ENCODE measurements at regions of chr4 and their contacts with region 1.

Region 1: DNA sequence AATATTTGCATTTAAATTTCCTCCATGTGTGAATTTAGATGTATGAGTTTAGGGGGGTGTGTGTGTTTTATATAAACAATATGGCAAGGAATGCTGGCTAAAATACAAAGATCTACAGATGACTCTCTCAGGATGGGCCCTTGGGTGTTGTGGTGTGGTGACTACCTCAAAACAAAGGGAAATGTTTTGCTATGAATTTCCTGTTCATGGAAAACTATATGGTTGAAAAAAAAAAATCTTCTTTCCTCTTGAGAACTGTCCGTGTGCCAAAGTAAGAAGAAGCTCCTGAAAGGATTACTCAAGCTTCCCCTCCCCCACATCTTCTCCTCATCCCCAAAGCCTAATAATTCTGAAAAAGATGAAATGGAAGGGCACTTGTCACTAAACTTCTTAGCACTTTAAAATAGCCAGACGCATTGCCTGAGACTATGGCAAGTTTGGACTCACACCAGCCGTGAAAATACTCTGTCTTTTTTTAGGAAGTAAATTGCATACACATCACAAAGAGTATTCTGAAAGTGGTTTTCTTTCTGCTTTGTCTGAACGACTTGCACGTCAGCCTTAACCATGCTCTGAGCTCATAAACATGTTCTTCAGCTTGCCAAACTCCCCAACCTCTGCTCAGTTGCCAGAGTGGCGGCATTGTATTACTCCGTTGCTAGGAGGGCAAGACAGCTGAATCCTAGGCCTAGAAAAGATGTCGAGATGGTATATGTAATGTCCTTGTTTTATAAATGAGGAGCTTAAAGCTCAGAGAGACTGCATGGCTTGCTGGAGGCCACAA is 250.4 kb upstream of the JADE1 start:
- DNase-seq: no peak

Region 2: GRCh38 chr4:128461291-128462102 is 97.6 kb before region 1 on chr4:
- intact Hi-C with region 1: loop called (anchors 10 kb)
- DNase-seq: no peak

Measured in posterior vena cava (tissue), 2 donors.